MCF 10A (cell line): ENCODE measurements at regions of chr5 and their contacts with region 1.

Region 1: GRCh38 chr5:147628058-147628895 is 118.4 kb upstream of the DPYSL3 start:
- DNase-seq: peak; percentile 90
- H3K4me3 Mint-ChIP-seq: no peak overlapping the region
- H3K27ac Mint-ChIP-seq: no peak overlapping the region
- H3K4me1 Mint-ChIP-seq: no peaks in the 10 kb centered on the region
- H3K27me3 Mint-ChIP-seq: peaks cover 20% of the 10 kb centered on the region
- CTCF ChIP-seq: peak; percentile 91

Region 2: DNA sequence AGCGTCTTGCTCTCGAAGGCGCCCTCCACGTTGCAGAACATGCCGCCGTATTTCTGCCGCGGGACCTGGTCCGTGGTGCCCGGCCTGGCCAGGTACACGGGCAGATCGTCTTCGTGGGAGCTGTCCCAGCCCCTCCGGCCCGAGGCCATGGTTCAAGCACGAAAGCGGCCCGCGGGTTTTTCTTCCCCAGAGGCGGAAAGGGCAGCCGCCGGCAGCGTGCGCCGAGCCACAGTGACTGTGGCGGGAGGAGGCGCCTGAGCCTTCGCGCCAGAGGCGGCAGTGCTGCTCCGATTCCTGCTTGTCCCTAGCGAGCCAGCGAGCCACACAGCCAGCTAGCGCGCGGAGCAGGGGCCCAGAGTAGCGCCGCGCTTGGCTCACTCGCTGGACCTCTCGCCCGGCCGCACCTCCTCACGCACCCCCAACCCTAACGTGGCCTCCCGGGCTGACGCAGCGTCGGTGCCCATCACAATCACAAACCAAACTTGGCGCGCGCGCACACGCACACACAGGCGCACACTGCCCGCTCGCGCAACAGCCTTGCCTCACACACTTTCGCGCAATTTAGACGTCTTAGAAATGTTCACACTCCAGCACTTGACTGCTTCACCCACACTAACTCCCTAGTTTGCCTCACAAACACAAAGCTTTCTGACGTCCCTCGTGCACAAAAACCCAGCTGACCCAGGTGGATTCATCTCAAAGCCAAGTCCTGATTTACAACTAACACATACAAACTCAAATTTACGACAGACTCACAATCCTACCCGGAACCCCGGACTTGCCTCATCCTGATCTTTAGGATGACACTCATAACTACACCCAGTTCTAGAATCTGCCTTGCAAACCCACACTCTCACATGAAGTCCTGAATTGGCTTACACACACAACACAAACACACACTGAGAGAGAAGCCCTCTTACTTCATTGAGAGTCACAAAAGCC is 118.3 kb before region 1 on chr5 and contains the start of gene DPYSL3:
- CTCF ChIA-PET with region 1: no interaction called
- POLR2A ChIA-PET with region 1: no interaction called
- intact Hi-C with region 1: no loop called
- DNase-seq: peak; percentile 69
- H3K4me3 Mint-ChIP-seq: peak within 1 kb of the TSS; percentile 73
- H3K27ac Mint-ChIP-seq: peak within 1 kb of the TSS; percentile 21
- H3K4me1 Mint-ChIP-seq: peaks cover 14% of the 10 kb centered on the region
- H3K27me3 Mint-ChIP-seq: peaks cover 32% of the 10 kb centered on the region
- CTCF ChIP-seq: peak; percentile 25
- total RNA-seq, gene DPYSL3: 8.2 and 8.9 TPM in 2 replicates

Region 3: GRCh38 chr5:147613359-147613758 is 14.9 kb before region 1 on chr5:
- CTCF ChIA-PET with region 1: interaction called, 24 read pairs
- POLR2A ChIA-PET with region 1: interaction called, 3 read pairs
- intact Hi-C with region 1: no loop called
- DNase-seq: peak; percentile 84
- H3K4me3 Mint-ChIP-seq: no peak overlapping the region
- H3K27ac Mint-ChIP-seq: no peak overlapping the region
- H3K4me1 Mint-ChIP-seq: peaks cover 23% of the 10 kb centered on the region
- H3K27me3 Mint-ChIP-seq: peaks cover 39% of the 10 kb centered on the region
- CTCF ChIP-seq: no peak

Region 4: GRCh38 chr5:147673266-147673665 is 45.0 kb after region 1 on chr5:
- CTCF ChIA-PET with region 1: interaction called, 17 read pairs
- POLR2A ChIA-PET with region 1: no interaction called
- intact Hi-C with region 1: loop called (anchors 1 kb)
- DNase-seq: no peak
- H3K4me3 Mint-ChIP-seq: no peak overlapping the region
- H3K27ac Mint-ChIP-seq: no peak overlapping the region
- H3K4me1 Mint-ChIP-seq: no peaks in the 10 kb centered on the region
- H3K27me3 Mint-ChIP-seq: no peaks in the 10 kb centered on the region
- CTCF ChIP-seq: no peak

Region 5: DNA sequence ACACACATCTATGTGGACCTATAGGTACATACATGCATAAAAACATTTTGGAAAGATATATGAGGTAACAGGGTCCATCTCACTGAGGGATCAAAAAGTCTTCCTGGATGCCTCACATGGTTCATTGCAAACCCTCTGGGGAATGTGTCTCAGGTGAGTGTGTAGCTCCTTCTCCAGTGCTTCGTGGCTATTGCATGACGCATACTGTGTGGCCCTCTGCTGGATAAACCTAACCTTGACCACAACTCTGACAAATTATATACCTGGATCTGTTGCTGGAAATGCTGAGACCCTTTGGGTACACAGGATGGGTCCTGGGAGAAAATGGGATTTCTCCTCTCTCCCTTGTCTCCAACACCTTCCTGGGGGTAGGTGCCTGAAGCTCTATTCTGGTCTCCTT is 62.3 kb after region 1 on chr5:
- CTCF ChIA-PET with region 1: interaction called, 50 read pairs
- POLR2A ChIA-PET with region 1: interaction called, 6 read pairs
- intact Hi-C with region 1: loop called (anchors 1 kb)
- DNase-seq: peak; percentile 64
- H3K4me3 Mint-ChIP-seq: no peak overlapping the region
- H3K27ac Mint-ChIP-seq: no peak overlapping the region
- H3K4me1 Mint-ChIP-seq: no peaks in the 10 kb centered on the region
- H3K27me3 Mint-ChIP-seq: peaks cover 54% of the 10 kb centered on the region
- CTCF ChIP-seq: peak; percentile 26

Region 6: DNA sequence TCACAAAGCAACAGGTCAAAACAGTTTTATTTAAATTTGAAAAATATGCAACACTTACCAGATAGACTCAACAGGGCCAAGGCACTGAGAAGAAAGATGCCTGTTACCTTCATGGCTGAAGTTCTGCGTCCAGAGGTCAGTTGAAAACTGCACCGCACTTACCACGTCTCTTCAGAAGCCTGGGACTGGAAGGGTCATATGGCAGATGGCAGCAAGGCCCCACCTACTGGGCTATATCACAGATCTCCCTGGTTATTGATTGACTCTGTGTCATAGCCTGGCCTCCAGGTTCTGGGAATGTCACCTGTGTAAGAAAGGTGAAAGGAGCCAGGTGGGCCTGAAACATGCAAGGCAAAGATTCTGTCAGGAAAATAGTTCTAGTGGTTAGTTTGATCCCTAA is 203.2 kb after region 1 on chr5 and contains the start of gene SPINK1:
- CTCF ChIA-PET with region 1: interaction called, 298 read pairs
- POLR2A ChIA-PET with region 1: interaction called, 3 read pairs
- intact Hi-C with region 1: no loop called
- DNase-seq: no peak
- H3K4me3 Mint-ChIP-seq: no peak within 1 kb of the TSS
- H3K27ac Mint-ChIP-seq: no peak within 1 kb of the TSS
- H3K4me1 Mint-ChIP-seq: peaks cover 29% of the 10 kb centered on the region
- H3K27me3 Mint-ChIP-seq: no peaks in the 10 kb centered on the region
- CTCF ChIP-seq: no peak
- total RNA-seq, gene SPINK1: 1.5 and 4.0 TPM in 2 replicates

Region 7: DNA sequence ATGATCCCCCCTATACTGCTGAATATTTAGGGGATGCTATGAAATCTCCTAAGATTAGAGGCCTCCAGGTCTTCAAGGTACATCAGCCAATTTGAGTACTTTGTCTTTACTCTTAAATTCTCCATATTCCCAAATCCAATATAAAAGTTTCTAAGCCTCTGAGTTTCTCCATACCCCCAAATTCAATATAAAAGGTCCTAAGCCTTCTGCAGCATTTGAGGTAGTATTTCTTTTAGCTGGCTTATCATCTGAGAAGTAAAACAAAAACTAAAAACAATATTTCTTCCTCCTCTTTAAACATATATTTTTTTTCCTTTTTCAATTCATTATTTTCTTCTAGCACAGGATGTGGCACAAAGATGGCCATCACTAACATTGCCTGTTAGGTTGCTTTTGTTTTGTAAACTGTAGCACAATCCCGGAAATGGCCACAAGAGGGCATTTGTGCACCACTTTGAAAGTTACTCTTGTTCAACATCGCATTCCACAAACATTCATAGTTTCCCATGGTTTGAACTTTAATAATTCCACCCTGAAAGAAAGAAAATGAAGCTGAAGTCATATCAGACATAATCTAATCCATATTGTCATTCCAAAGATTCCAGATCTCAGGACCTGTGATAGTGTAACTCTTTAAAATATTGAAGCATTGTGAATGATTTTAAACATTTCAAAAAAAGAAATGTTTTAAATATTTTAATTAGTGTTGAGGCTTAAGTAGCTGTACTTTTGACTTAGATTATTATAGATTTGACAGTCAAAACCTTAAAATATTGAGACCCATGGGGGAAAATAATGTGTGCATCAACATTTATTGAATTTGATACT is 229.2 kb after region 1 on chr5:
- CTCF ChIA-PET with region 1: interaction called, 50 read pairs
- POLR2A ChIA-PET with region 1: no interaction called
- intact Hi-C with region 1: loop called (anchors 1 kb)
- DNase-seq: peak; percentile 80
- H3K4me3 Mint-ChIP-seq: no peak overlapping the region
- H3K27ac Mint-ChIP-seq: no peak overlapping the region
- H3K4me1 Mint-ChIP-seq: no peaks in the 10 kb centered on the region
- H3K27me3 Mint-ChIP-seq: no peaks in the 10 kb centered on the region
- CTCF ChIP-seq: peak; percentile 76

Region 8: DNA sequence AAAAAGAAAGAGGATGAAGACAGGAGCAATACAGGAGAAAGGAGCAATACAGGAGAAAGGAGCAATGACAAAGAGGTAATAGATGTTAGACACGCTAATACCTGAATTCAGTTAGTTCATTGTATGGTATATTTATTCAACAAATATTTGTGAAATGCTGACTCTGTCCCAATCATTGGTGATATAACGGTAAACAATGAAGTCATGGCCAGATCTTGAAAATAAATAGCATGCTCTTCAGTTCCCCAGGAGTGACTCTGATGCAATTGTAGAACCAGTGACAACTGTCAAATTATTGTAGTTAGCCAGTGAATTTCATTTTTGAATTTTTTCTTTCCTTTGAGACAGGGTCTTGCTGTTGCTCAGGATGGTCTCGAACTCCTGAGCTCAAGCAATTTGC is 492.0 kb after region 1 on chr5:
- CTCF ChIA-PET with region 1: interaction called, 4 read pairs
- POLR2A ChIA-PET with region 1: no interaction called
- intact Hi-C with region 1: loop called (anchors 5 kb)
- DNase-seq: no peak
- H3K4me3 Mint-ChIP-seq: no peak overlapping the region
- H3K27ac Mint-ChIP-seq: no peak overlapping the region
- H3K4me1 Mint-ChIP-seq: no peaks in the 10 kb centered on the region
- H3K27me3 Mint-ChIP-seq: no peaks in the 10 kb centered on the region
- CTCF ChIP-seq: no peak

Region 9: DNA sequence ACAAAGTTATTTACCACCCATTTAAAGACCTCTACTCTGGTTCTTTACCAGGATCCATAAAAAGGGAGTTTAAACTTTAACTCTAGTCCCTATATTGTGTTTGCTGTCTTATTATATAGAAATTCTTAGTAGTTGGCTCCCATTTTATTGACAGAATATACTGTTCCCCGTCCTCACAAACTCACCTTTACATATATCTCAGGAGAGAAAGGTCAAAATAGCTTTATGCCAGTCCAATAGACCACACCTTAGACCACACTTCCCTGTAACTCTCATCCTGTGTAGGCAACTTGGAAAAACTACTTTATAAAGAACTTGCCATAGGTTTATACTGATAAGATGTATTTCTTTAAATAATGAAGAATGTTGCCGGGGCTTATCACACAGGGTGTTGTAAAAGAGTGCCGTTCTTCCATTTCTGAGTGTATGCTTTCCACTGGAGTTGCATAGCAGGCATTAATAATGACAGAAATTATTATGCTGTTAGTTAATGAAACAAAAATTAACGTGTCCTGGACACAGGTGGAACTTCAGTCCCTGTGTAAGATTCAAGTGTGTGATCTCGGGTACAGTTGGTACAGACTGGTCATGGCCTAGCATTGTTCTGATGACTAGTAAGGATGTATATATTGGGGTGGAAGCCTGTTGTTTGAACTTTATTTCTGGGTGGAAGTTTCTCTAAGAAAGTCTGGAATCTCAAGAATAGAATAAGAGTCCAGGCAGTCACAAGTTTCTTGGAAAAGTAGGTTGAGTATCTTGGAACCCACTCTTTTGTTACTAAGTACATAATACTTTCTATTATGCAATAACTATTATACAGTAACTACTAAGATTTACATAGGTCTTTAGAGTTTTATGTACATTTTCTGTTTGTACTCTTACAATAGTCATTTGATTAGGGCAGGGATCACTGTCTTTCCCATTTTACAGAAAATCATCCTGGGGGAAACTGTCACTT is 507.1 kb after region 1 on chr5:
- CTCF ChIA-PET with region 1: no interaction called
- POLR2A ChIA-PET with region 1: no interaction called
- intact Hi-C with region 1: no loop called
- DNase-seq: no peak
- H3K4me3 Mint-ChIP-seq: no peak overlapping the region
- H3K27ac Mint-ChIP-seq: no peak overlapping the region
- H3K4me1 Mint-ChIP-seq: no peaks in the 10 kb centered on the region
- H3K27me3 Mint-ChIP-seq: no peaks in the 10 kb centered on the region
- CTCF ChIP-seq: no peak